ENCODE measurements at regions of chr5 and their contacts with region 1.

Region 1: GRCh38 chr5:16934123-16934522 is 2.0 kb downstream of the MYO10 start:
- DNase-seq: peak; percentile 91
- ATAC-seq: peak; percentile 14
- H3K4me3 Mint-ChIP-seq: peak overlapping the region; percentile 87
- H3K27ac Mint-ChIP-seq: no peak overlapping the region
- H3K4me1 Mint-ChIP-seq: peaks cover 61% of the 10 kb centered on the region
- H3K27me3 Mint-ChIP-seq: peaks cover 78% of the 10 kb centered on the region
- CTCF ChIP-seq: peak; percentile 91

Region 2: DNA sequence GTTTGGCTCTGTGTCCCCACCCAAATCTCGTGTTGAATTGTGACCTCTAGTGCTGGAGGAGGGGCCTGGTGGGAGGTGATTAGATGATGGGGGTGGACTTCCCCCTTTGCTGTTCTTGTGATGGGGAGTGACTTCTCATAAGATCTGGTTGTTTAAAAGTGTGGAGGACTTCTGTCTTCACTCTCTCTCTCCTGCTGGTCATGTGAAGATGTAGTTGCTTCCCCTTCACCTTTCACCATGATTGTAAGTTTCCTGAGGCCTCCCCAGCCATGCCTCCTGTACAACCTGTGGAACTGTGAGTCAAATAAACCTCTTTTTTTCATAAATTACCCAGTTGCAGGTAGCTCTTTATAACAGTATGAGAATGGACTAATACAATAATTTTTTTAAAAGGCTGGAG is 12.6 kb after region 1 on chr5:
- CTCF ChIA-PET with region 1: no interaction called
- POLR2A ChIA-PET with region 1: no interaction called
- DNase-seq: no peak
- ATAC-seq: no peak
- H3K4me3 Mint-ChIP-seq: no peak overlapping the region
- H3K27ac Mint-ChIP-seq: no peak overlapping the region
- H3K4me1 Mint-ChIP-seq: no peaks in the 10 kb centered on the region
- H3K27me3 Mint-ChIP-seq: no peaks in the 10 kb centered on the region
- CTCF ChIP-seq: no peak

Region 3: GRCh38 chr5:17204133-17204489 is 270.0 kb after region 1 on chr5:
- CTCF ChIA-PET with region 1: interaction called, 10 read pairs
- POLR2A ChIA-PET with region 1: no interaction called
- DNase-seq: no peak
- ATAC-seq: peak; percentile 34
- H3K4me3 Mint-ChIP-seq: no peak overlapping the region
- H3K27ac Mint-ChIP-seq: peak overlapping the region; percentile 42; the same call in 1 of the 2 replicates
- H3K4me1 Mint-ChIP-seq: peaks cover 16% of the 10 kb centered on the region
- H3K27me3 Mint-ChIP-seq: no peaks in the 10 kb centered on the region
- CTCF ChIP-seq: no peak